Activated naive CD8-positive, alpha-beta T cell treated with anti-CD3 and anti-CD28 coated beads, Interleukin-2, amount 10 ng/mL, durations not matched to agents 7 days and 5 days (primary cell): ENCODE measurements at regions of chr17 and their contacts with region 1.

Region 1: GRCh38 chr17:67452681-67453554 is 75.8 kb downstream of the PITPNC1 start:
- DNase-seq: peak; percentile 54
- ATAC-seq: peak; percentile 85
- H3K4me3 Mint-ChIP-seq: peak overlapping the region; percentile 78
- H3K27ac Mint-ChIP-seq: peak overlapping the region; percentile 97
- H3K4me1 Mint-ChIP-seq: peaks cover 64% of the 10 kb centered on the region
- H3K27me3 Mint-ChIP-seq: no peaks in the 10 kb centered on the region

Region 2: GRCh38 chr17:67390646-67391384 is 62.1 kb before region 1 on chr17:
- POLR2A ChIA-PET with region 1: interaction called, 12 read pairs
- DNase-seq: peak; percentile 68
- ATAC-seq: peak; percentile 92
- H3K4me3 Mint-ChIP-seq: peak overlapping the region; percentile 88
- H3K27ac Mint-ChIP-seq: peak overlapping the region; percentile 92
- H3K4me1 Mint-ChIP-seq: peaks cover 55% of the 10 kb centered on the region
- H3K27me3 Mint-ChIP-seq: no peaks in the 10 kb centered on the region

Region 3: GRCh38 chr17:67469208-67469895 is 16.4 kb after region 1 on chr17:
- POLR2A ChIA-PET with region 1: interaction called, 65 read pairs
- DNase-seq: peak; percentile 55
- ATAC-seq: peak; percentile 90
- H3K4me3 Mint-ChIP-seq: peak overlapping the region; percentile 68
- H3K27ac Mint-ChIP-seq: peak overlapping the region; percentile 88
- H3K4me1 Mint-ChIP-seq: peaks cover 59% of the 10 kb centered on the region
- H3K27me3 Mint-ChIP-seq: no peaks in the 10 kb centered on the region

Region 4: DNA sequence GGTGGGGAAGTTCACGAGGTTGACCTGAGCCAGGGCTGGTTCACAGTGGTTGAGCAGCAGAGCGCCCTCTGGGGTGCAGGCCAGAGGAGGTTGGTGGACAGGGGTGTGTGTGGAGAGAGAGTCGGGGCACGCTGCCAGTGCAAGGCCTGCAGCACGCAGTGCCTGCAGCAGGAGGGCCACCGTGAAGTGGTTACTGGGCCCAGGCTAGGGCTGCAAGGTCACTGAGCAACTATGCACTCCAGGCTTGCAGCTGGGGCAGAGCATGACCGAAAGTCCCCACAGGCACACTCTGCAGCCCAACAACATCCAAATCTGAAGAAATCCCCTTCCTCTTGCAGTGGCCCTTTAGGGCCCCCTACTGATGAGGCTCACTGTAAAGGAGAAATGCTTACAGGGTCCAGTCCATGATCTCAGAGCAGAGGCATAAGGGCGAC is 175.7 kb after region 1 on chr17:
- POLR2A ChIA-PET with region 1: no interaction called
- DNase-seq: no peak
- ATAC-seq: peak; percentile 18
- H3K4me3 Mint-ChIP-seq: no peak overlapping the region
- H3K27ac Mint-ChIP-seq: no peak overlapping the region
- H3K4me1 Mint-ChIP-seq: no peaks in the 10 kb centered on the region
- H3K27me3 Mint-ChIP-seq: no peaks in the 10 kb centered on the region